ENCODE measurements at regions of chr17 and their contacts with region 1.

Region 1: DNA sequence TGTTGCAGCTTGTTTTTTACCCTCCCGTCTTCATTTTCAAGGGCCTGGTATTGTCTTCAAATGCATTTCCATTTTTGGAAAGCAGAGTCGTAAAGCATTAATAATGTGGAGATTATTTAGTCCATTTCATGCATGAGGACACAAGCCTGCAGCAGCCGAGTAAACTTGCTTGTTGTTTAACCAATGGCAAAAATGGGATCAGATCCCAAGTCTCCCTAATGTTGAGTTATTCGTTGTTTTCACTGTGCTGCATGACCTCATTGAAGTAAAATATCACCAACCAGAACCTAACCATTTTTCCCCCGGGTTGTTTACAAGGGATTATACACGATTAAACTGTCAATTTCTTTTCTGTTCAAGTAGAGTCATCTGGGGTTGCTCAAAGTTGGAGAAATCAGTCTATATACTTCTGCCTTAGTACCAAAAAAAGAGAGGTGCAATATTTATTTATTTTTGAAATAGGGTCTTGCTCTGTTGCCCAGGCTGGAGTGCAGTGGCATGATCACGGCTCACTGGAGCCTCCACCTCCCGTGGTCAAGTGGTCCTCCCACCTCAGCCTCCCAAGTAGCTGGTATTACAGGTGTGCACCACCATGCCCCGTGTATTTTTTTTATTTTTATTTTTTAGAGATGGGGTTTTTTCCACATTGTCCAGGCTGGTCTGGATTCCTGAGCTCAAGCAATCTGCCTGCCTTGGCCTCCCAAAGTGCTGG is 12.4 kb downstream of the AMZ2 start:
- DNase-seq: no peak
- H3K4me3 Mint-ChIP-seq: no peak overlapping the region
- H3K27ac Mint-ChIP-seq: no peak overlapping the region
- H3K4me1 Mint-ChIP-seq: no peaks in the 10 kb centered on the region
- H3K27me3 Mint-ChIP-seq: no peaks in the 10 kb centered on the region
- CTCF ChIP-seq: no peak

Region 2: DNA sequence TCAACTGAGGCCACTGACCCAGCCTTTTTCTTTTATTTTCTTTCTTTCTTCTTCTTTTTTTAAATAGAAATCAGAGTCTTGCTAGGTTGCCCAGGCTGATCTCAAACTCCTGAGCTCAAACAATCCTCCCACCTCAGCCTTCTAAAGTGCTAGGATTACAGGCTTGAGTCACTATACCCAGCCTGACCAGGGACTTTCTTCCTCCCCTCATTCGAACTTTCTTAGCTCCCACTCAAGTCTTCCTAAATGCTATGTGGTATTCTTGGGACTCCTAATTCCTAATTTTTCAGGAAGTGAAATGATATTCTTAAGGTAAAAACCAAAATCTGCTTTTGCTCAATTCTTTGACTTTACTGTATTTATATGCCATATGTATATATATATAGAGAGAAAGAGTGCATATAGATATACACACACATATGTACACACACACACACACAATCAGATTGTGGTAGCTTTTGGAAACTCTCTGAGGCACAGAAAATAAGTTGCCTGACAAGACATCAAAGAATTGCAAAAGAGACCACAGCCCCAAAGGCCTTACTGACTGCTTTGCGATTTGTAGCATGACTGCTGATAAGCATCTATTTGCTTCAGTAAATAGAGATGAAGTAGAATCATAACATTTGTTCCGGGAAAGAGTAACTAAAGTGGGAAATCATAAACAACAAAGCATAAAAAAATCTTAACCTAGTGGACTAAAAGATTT is 21.9 kb before region 1 on chr17:
- CTCF ChIA-PET with region 1: no interaction called
- intact Hi-C with region 1: no loop called
- DNase-seq: no peak
- H3K4me3 Mint-ChIP-seq: no peak overlapping the region
- H3K27ac Mint-ChIP-seq: no peak overlapping the region
- H3K4me1 Mint-ChIP-seq: no peaks in the 10 kb centered on the region
- H3K27me3 Mint-ChIP-seq: peaks cover 15% of the 10 kb centered on the region
- CTCF ChIP-seq: no peak

Region 3: GRCh38 chr17:68398691-68399637 is 138.8 kb after region 1 on chr17:
- CTCF ChIA-PET with region 1: interaction called, 21 read pairs
- intact Hi-C with region 1: loop called (anchors 2 kb)
- DNase-seq: peak; percentile 75
- H3K4me3 Mint-ChIP-seq: no peak overlapping the region
- H3K27ac Mint-ChIP-seq: no peak overlapping the region
- H3K4me1 Mint-ChIP-seq: no peaks in the 10 kb centered on the region
- H3K27me3 Mint-ChIP-seq: peaks cover 13% of the 10 kb centered on the region
- CTCF ChIP-seq: peak; percentile 67

Region 4: GRCh38 chr17:68435876-68436842 is 176.0 kb after region 1 on chr17:
- CTCF ChIA-PET with region 1: no interaction called
- intact Hi-C with region 1: loop called (anchors 1 kb)
- DNase-seq: peak; percentile 79
- H3K4me3 Mint-ChIP-seq: no peak overlapping the region
- H3K27ac Mint-ChIP-seq: peak overlapping the region; percentile 50
- H3K4me1 Mint-ChIP-seq: peaks cover 10% of the 10 kb centered on the region
- H3K27me3 Mint-ChIP-seq: no peaks in the 10 kb centered on the region
- CTCF ChIP-seq: peak; percentile 83